ENCODE measurements at regions of chr3 and their contacts with region 1.

Region 1: DNA sequence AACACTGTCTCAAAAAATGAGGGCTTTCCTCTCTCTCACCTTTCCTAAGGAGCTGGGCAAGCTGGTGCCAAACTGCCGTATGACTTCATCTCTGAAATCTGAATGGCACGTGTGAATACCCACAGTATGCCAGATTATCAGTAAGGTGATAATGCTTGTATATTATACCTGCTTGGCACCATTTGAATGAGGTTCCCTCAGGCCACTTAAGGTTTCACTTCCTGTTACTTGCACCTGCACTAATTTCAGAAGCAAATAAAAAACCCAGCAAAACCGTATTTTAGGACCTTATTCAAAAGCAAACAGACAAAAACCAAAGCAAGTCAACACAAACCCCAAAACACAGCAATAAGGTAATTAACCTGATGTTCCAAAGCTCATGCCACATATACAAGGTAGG is 19.7 kb downstream of the FOXP1 start:
- DNase-seq: no peak
- ATAC-seq: no peak
- H3K4me3 ChIP-seq: no peak overlapping the region
- H3K27ac ChIP-seq: no peak overlapping the region
- H3K4me1 ChIP-seq: peaks cover 0 to 17% (median 5%) of the 10 kb centered on the region in 12 donors
- H3K27me3 ChIP-seq: no peaks in the 10 kb centered on the region
- CTCF ChIP-seq: no peak
- POLR2A ChIP-seq: no peak

Region 2: GRCh38 chr3:71428841-71429596 is 134.8 kb before region 1 on chr3:
- intact Hi-C with region 1: loop called in 1 of 10 experiments (anchors 10 kb)
- DNase-seq: peak in 4 of 5 donors; percentile 46 to 66 (median 52)
- ATAC-seq: peak; percentile 23 to 68 (median 54)
- H3K4me3 ChIP-seq: peak overlapping the region in 8 of 12 donors; percentile 6 to 38 (median 18)
- H3K27ac ChIP-seq: peak overlapping the region in 11 of 12 donors; percentile 8 to 60 (median 47)
- H3K4me1 ChIP-seq: peaks cover 0 to 54% (median 34%) of the 10 kb centered on the region in 12 donors
- H3K27me3 ChIP-seq: no peaks in the 10 kb centered on the region
- CTCF ChIP-seq: no peak
- POLR2A ChIP-seq: no peak

Measured in heart left ventricle (tissue), 16 donors.